ENCODE measurements at regions of chr12 and their contacts with region 1.

Region 1: GRCh38 chr12:97984974-97985580 is 522.5 kb downstream of the RMST start:
- DNase-seq: peak in 1 of 2 donors; percentile 40
- H3K4me3 ChIP-seq: no peak overlapping the region
- H3K27ac ChIP-seq: peak overlapping the region; percentile 32 to 45
- H3K4me1 ChIP-seq: no peaks in the 10 kb centered on the region
- H3K27me3 ChIP-seq: no peaks in the 10 kb centered on the region
- CTCF ChIP-seq: no peak
- POLR2A ChIP-seq: no peak

Region 2: GRCh38 chr12:96902076-96902475 is 1083.0 kb before region 1 on chr12:
- intact Hi-C with region 1: loop called (anchors 5 kb)
- DNase-seq: no peak
- H3K4me3 ChIP-seq: no peak overlapping the region
- H3K27ac ChIP-seq: no peak overlapping the region
- H3K4me1 ChIP-seq: no peaks in the 10 kb centered on the region
- H3K27me3 ChIP-seq: no peaks in the 10 kb centered on the region
- CTCF ChIP-seq: no peak
- POLR2A ChIP-seq: no peak

Region 3: GRCh38 chr12:97960754-97961608 is 24.1 kb before region 1 on chr12:
- intact Hi-C with region 1: loop called (anchors 2 kb)
- DNase-seq: no peak
- H3K4me3 ChIP-seq: no peak overlapping the region
- H3K27ac ChIP-seq: no peak overlapping the region
- H3K4me1 ChIP-seq: no peaks in the 10 kb centered on the region
- H3K27me3 ChIP-seq: no peaks in the 10 kb centered on the region
- CTCF ChIP-seq: peak in 2 of 3 donors; percentile 46 to 48
- POLR2A ChIP-seq: no peak